ENCODE measurements at regions of chr1 and their contacts with region 1.

Region 1: GRCh38 chr1:234499119-234499942 is 20.4 kb upstream of the TARBP1 start:
- DNase-seq: peak; percentile 97
- H3K4me3 Mint-ChIP-seq: peak overlapping the region; percentile 28
- H3K27ac Mint-ChIP-seq: peak overlapping the region; percentile 71
- H3K4me1 Mint-ChIP-seq: peaks cover 53% of the 10 kb centered on the region
- H3K27me3 Mint-ChIP-seq: no peaks in the 10 kb centered on the region
- CTCF ChIP-seq: peak; percentile 100

Region 2: DNA sequence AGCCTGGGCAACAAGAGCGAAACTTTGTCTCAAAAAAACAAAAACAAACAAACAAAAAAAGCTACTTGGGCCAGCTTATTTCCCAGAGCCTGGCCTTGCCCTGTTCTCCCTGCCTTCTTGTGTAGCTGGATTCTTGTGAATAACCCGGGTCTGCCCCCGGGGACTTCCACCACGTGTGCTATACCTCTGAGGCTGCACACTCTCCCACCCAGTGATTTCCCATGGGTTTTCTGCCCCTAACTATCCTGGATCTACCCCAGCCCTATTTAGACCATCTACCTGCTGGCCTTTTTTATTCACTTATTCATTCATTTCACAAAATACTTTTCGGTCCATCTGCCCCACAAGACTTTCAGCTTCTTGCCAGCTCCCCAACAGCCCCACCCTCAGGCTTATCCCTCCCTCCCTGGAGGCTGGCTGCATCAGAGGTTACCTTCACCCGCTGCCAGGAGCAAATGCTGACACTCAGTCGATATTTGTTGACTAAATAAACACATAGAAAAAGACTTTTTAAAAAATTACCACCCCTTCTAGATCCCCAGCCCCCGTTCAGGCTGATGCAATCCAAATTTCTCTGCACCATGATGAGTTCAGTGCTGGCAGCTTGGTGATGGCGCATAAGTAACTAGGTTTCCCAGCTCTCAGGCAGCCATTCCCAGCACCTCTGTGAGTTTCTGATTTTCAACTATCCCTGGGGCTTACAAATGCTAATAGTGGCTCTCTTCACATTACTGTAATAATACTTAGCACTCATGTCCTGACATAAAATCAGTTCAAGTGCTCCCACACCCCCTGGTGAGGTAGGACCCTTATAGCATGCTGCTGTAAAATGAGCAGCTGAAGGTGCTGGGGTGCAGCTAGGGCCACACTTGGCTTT is 10.4 kb after region 1 on chr1:
- CTCF ChIA-PET with region 1: interaction called, 29 read pairs
- POLR2A ChIA-PET with region 1: interaction called, 74 read pairs
- intact Hi-C with region 1: no loop called
- DNase-seq: peak; percentile 84
- H3K4me3 Mint-ChIP-seq: peak overlapping the region; percentile 52
- H3K27ac Mint-ChIP-seq: peak overlapping the region; percentile 85
- H3K4me1 Mint-ChIP-seq: peaks cover 46% of the 10 kb centered on the region
- H3K27me3 Mint-ChIP-seq: no peaks in the 10 kb centered on the region
- CTCF ChIP-seq: no peak

Region 3: GRCh38 chr1:234564642-234565037 is 65.3 kb after region 1 on chr1:
- CTCF ChIA-PET with region 1: interaction called, 10 read pairs
- POLR2A ChIA-PET with region 1: interaction called, 49 read pairs
- intact Hi-C with region 1: loop called (anchors 1 kb)
- DNase-seq: peak; percentile 100
- H3K4me3 Mint-ChIP-seq: no peak overlapping the region
- H3K27ac Mint-ChIP-seq: peak overlapping the region; percentile 80
- H3K4me1 Mint-ChIP-seq: peaks cover 25% of the 10 kb centered on the region
- H3K27me3 Mint-ChIP-seq: no peaks in the 10 kb centered on the region
- CTCF ChIP-seq: no peak

Region 4: DNA sequence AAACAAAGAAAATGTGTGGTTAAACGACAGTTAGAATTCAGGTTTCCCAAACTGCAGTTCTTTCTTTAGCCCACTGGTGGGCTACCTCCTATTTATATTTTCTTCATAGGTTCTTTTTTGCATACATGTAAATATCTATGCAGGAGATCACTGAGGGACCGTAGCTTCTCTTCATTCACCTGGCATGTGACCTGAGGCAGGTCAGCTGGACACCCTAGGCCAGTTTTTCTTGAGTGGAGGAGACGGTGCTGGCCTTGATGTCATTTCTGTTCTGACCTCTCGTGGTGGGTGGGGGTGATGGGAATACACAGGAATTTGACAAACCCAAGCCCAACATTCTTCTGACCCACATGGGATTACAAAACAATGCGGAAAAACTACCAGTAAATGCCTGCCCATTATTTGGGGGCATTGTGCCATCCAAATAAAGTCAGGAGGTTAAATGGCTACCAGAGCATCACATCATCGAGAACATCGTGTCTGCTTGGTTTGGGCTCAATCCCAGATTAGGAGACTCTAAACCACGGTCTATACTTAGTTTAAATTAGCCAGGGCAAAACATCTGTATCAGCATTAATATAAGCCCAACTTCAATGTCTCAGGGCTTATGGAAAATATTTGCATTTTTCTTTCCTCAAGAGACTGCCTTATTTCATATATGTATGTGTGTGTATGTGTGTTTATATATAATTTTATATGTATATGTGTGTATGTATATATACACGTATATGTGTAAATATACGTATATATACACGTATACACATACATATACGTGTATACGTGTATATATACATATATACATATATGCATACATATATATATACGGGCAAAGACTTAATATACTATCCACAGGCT is 118.0 kb after region 1 on chr1:
- CTCF ChIA-PET with region 1: interaction called, 42 read pairs
- POLR2A ChIA-PET with region 1: interaction called, 904 read pairs
- intact Hi-C with region 1: no loop called
- DNase-seq: peak; percentile 80
- H3K4me3 Mint-ChIP-seq: no peak overlapping the region
- H3K27ac Mint-ChIP-seq: peak overlapping the region; percentile 99
- H3K4me1 Mint-ChIP-seq: peaks cover 70% of the 10 kb centered on the region
- H3K27me3 Mint-ChIP-seq: no peaks in the 10 kb centered on the region
- CTCF ChIP-seq: peak; percentile 28

Region 5: DNA sequence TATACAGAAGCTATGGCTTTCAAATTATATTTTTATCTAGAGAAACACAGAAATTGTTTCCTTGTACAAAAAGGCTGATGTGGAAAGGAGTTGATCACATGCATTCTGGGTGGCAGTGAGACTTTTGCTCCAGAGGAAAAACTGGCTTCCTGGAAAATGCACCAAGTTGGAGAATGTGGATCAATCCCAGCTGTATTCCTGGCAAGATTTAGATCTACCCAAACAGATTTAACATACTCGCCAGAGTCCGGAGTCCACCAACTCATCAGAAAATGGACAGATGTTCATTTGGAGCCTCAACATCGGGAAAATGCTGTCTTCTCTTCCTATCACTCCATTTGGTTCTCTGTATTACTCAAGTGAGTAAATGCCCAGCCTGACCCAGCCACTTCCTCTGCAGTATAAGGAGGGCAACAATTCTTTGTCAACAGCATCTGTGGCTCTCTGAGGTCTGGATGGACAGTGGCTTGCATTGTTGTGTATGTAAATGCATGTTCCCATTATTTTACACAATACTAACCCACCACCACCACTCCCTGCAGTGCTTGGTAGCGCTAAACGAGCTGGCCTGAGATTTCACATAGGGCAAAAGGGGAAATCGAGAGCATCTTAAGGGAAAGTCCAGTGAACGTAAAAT is 336.8 kb after region 1 on chr1:
- CTCF ChIA-PET with region 1: no interaction called
- POLR2A ChIA-PET with region 1: interaction called, 4 read pairs
- intact Hi-C with region 1: loop called (anchors 10 kb)
- DNase-seq: no peak
- H3K4me3 Mint-ChIP-seq: no peak overlapping the region
- H3K27ac Mint-ChIP-seq: no peak overlapping the region
- H3K4me1 Mint-ChIP-seq: no peaks in the 10 kb centered on the region
- H3K27me3 Mint-ChIP-seq: no peaks in the 10 kb centered on the region
- CTCF ChIP-seq: no peak

Region 6: GRCh38 chr1:235011599-235012435 is 512.5 kb after region 1 on chr1:
- CTCF ChIA-PET with region 1: interaction called, 3 read pairs
- POLR2A ChIA-PET with region 1: interaction called, 3 read pairs
- intact Hi-C with region 1: loop called (anchors 2 kb)
- DNase-seq: peak; percentile 99
- H3K4me3 Mint-ChIP-seq: peak overlapping the region; percentile 47
- H3K27ac Mint-ChIP-seq: peak overlapping the region; percentile 92
- H3K4me1 Mint-ChIP-seq: peaks cover 14% of the 10 kb centered on the region
- H3K27me3 Mint-ChIP-seq: no peaks in the 10 kb centered on the region
- CTCF ChIP-seq: no peak

Region 7: GRCh38 chr1:235093696-235094592 is 594.6 kb after region 1 on chr1:
- CTCF ChIA-PET with region 1: interaction called, 317 read pairs
- POLR2A ChIA-PET with region 1: interaction called, 4 read pairs
- intact Hi-C with region 1: no loop called
- DNase-seq: peak; percentile 83
- H3K4me3 Mint-ChIP-seq: no peak overlapping the region
- H3K27ac Mint-ChIP-seq: no peak overlapping the region
- H3K4me1 Mint-ChIP-seq: peaks cover 6% of the 10 kb centered on the region
- H3K27me3 Mint-ChIP-seq: no peaks in the 10 kb centered on the region
- CTCF ChIP-seq: peak; percentile 100

Measured in MCF 10A (cell line).